ENCODE measurements at regions of chr7 and their contacts with region 1.

Region 1: DNA sequence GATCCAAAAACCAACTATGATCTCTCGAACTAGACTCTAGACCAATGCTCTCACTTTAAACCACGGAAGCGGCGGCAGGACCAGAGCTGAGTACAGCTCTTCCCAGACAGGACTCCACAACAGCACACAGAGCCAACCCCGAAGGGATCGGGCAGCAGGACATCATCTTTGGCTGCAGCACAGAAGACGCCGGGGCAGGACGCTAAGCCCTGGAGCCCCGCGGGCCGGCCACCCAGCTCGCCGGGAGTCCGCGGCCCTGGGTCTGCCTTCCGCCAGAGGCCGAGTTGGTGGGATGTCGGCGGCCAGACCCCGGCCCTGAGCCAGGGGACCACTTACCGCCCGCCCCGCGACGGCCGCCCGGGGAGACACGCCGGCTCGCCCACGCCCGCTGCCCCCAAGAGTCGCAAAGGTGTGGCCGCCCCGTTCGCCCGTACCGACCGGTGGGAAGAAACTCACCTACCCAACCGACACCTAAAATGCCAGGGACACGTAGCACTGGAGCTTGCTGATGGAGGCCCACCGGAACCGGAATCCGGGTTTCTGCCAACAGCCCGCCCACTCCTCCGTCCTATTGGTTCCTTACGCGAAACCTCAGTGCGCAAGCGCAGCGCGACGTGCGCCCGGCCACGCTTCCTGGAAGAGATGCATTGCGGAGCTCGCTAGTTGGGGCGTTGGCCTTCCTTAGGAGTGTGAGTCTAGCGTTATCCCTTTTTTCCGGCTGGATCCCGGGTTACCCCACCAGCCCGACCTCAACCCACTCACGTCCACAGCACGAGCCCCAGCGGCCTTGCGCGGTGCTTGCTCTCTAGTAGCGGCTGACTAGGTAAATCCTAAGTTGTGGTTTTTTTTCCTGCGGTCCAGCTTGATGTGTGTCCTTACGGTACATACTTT is at the start of gene SEC61G:
- DNase-seq: peak; percentile 97
- H3K4me3 Mint-ChIP-seq: peak within 1 kb of the TSS; percentile 100
- H3K27ac Mint-ChIP-seq: peak within 1 kb of the TSS; percentile 94
- H3K4me1 Mint-ChIP-seq: peaks cover 24% of the 10 kb centered on the region
- H3K27me3 Mint-ChIP-seq: peaks cover 4% of the 10 kb centered on the region
- total RNA-seq, gene SEC61G: 171 to 177 TPM

Region 2: GRCh38 chr7:54773472-54774399 is 14.8 kb after region 1 on chr7:
- CTCF ChIA-PET with region 1: interaction called, 30 read pairs
- POLR2A ChIA-PET with region 1: interaction called, 3 read pairs
- intact Hi-C with region 1: loop called (anchors 1 kb)
- DNase-seq: peak; percentile 80
- H3K4me3 Mint-ChIP-seq: peak overlapping the region; percentile 64
- H3K27ac Mint-ChIP-seq: no peak overlapping the region
- H3K4me1 Mint-ChIP-seq: peaks cover 5% of the 10 kb centered on the region
- H3K27me3 Mint-ChIP-seq: peaks cover 9% of the 10 kb centered on the region

Region 3: GRCh38 chr7:54995631-54996340 is 236.8 kb after region 1 on chr7:
- CTCF ChIA-PET with region 1: no interaction called
- POLR2A ChIA-PET with region 1: no interaction called
- intact Hi-C with region 1: loop called (anchors 1 kb)
- DNase-seq: peak; percentile 50
- H3K4me3 Mint-ChIP-seq: no peak overlapping the region
- H3K27ac Mint-ChIP-seq: peak overlapping the region; percentile 65
- H3K4me1 Mint-ChIP-seq: peaks cover 29% of the 10 kb centered on the region
- H3K27me3 Mint-ChIP-seq: peaks cover 7% of the 10 kb centered on the region

Region 4: DNA sequence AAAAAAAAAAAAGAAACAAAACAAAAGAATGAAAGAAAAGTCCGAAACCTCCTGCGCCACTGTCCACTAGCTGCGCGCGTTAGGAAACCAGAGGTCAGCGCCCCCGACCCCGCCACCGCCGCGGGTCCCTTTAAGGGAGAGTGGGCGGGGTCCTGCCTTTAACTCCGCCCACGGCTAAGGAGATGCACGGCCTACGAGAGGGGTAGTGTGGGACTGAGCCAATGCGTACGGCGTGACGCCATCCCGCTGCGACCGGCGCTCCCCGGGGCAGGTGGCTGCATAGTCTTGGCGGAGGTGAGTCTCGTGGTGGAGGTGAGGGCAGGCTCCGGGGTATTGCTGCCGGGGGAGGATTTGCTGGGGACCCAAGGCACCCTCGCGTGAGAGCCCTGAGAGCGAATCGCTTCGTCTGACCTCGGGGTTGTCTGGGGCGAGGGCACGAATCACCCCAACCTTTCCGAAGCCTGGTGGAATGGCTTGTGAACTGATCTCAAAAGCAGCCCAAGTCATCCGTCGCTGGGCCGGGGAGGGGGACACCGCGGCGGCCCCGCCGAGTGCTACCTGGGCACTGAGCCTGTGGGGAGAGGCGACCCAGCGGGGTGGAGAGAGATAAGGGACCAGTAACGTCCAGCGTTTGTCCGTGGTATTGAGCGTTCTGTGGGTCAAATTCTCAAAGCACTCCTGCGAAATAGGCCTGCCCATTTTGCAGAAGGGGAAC is 1192.8 kb after region 1 on chr7 and contains the start of gene MRPS17:
- CTCF ChIA-PET with region 1: no interaction called
- POLR2A ChIA-PET with region 1: no interaction called
- intact Hi-C with region 1: loop called (anchors 10 kb)
- DNase-seq: peak; percentile 96
- H3K4me3 Mint-ChIP-seq: peak within 1 kb of the TSS; percentile 86
- H3K27ac Mint-ChIP-seq: peak within 1 kb of the TSS; percentile 85
- H3K4me1 Mint-ChIP-seq: peaks cover 20% of the 10 kb centered on the region
- H3K27me3 Mint-ChIP-seq: peaks cover 3% of the 10 kb centered on the region
- total RNA-seq, gene MRPS17: 21.7 to 22.3 TPM